ENCODE measurements at regions of chrX and their contacts with region 1.

Region 1: DNA sequence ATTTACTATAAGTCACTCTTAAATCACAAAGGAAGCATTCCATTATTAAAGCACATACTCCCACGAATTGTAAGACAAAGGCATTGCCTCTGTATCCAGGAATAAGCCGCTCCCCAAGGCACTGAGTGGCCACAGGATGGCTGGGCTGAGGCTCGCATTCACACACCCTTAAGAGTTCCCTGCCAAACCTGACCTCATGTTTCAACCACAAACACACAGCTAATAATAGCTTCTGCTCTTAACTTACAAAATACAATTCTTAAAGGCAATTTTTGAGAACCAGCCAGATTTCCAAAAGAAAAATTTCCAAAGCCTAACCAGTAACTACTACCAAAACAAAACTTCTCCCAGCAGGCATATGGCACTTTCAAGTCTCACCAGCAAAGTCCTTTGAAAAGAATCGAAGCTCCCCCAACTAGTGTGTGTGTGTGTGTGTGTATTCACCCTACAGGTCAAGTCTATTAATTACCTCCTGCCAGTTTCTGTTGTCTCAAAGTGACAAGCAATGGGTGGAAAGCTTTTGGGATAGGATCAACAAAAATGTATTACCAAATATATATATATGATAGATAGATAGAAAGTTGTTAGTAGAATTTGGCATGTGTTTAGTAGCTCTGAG is 36.0 kb downstream of the ARHGAP6 start:
- DNase-seq: peak; percentile 79

Region 2: GRCh38 chrX:11665144-11666111 is 35.7 kb after region 1 on chrX and contains the start of gene ARHGAP6:
- intact Hi-C with region 1: loop called in 1 of 2 experiments (anchors 2 kb)
- DNase-seq: peak; percentile 82
- total RNA-seq, gene ARHGAP6: 19.6 to 20.2 TPM